ENCODE measurements at regions of chr6 and their contacts with region 1.

Region 1: DNA sequence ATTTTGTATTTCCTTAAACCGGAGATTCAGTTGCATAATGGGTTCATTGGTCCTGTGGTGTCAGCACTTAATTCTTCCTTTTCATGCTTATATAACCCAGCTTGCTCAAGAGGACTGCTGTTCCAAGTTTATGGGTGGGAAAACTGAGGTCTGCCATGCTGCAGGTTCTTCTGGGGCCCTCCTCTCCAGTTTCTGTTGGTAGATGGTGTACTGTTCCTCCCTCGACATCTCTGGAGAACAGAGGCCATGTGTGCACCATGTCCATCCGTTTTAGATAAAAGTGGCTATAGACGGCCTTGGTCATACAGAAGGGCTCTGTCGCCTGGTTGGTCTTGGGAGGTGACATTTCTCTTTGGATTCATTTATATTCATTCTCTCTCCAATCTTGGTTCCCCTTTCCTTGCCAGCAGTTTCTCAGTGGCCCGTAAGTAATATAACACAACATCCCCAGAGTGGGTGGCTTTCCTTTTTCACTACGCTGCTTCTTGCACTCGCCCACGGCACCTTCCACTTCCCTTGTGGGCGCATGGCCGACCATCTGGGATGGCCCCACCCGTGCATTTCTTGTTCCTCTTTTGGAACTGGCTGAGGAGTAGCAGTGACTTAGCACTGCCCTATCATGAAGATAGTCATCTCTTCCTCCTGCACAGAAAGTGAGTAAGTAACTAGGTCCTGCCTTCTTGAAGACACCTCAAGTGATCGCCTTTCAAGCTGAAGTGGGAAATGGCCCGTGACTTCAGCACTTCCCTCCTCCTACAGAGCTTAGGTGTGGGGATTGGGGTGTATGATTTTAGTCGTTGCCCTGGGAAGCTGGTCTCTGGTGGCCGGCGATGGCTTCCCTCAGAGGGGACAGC is 94.2 kb downstream of the RREB1 start:
- H3K4me3 Mint-ChIP-seq: peak overlapping the region; percentile 60
- H3K27ac Mint-ChIP-seq: peak overlapping the region; percentile 93
- H3K4me1 Mint-ChIP-seq: peaks cover 79% of the 10 kb centered on the region
- H3K27me3 Mint-ChIP-seq: no peaks in the 10 kb centered on the region

Region 2: GRCh38 chr6:7073821-7074525 is 127.9 kb before region 1 on chr6:
- intact Hi-C with region 1: no loop called
- H3K4me3 Mint-ChIP-seq: peak overlapping the region; percentile 37
- H3K27ac Mint-ChIP-seq: peak overlapping the region; percentile 80
- H3K4me1 Mint-ChIP-seq: peaks cover 28% of the 10 kb centered on the region
- H3K27me3 Mint-ChIP-seq: no peaks in the 10 kb centered on the region

Region 3: GRCh38 chr6:7188492-7188891 is 13.4 kb before region 1 on chr6:
- intact Hi-C with region 1: loop called (anchors 2 kb)
- H3K4me3 Mint-ChIP-seq: peak overlapping the region; percentile 23
- H3K27ac Mint-ChIP-seq: peak overlapping the region; percentile 92
- H3K4me1 Mint-ChIP-seq: peaks cover 70% of the 10 kb centered on the region
- H3K27me3 Mint-ChIP-seq: no peaks in the 10 kb centered on the region

Measured in dendritic cell treated with granulocyte-macrophage colony-stimulating factor and Interleukin-4, amounts not matched to agents 40 ng/mL and 50 ng/mL, for 4 days (primary cell).